Activated CD4-positive, alpha-beta memory T cell treated with anti-CD3 and anti-CD28 coated beads, Interleukin-2, amount 10 ng/mL, durations not matched to agents 7 days and 5 days (primary cell): ENCODE measurements at regions of chr1 and their contacts with region 1.

Region 1: GRCh38 chr1:9004700-9005394 is 21.4 kb downstream of the SLC2A7 start:
- DNase-seq: peak; percentile 87
- H3K4me3 Mint-ChIP-seq: no peak overlapping the region
- H3K27ac Mint-ChIP-seq: no peak overlapping the region
- H3K4me1 Mint-ChIP-seq: peaks cover 10% of the 10 kb centered on the region
- H3K27me3 Mint-ChIP-seq: peaks cover 2% of the 10 kb centered on the region

Region 2: GRCh38 chr1:8727809-8728213 is 277.0 kb before region 1 on chr1:
- CTCF ChIA-PET with region 1: interaction called, 10 read pairs
- POLR2A ChIA-PET with region 1: no interaction called
- DNase-seq: no peak
- H3K4me3 Mint-ChIP-seq: no peak overlapping the region
- H3K27ac Mint-ChIP-seq: no peak overlapping the region
- H3K4me1 Mint-ChIP-seq: peaks cover 21% of the 10 kb centered on the region
- H3K27me3 Mint-ChIP-seq: no peaks in the 10 kb centered on the region

Region 3: GRCh38 chr1:8866792-8867415 is 137.9 kb before region 1 on chr1:
- CTCF ChIA-PET with region 1: interaction called, 72 read pairs
- POLR2A ChIA-PET with region 1: interaction called, 9 read pairs
- DNase-seq: no peak
- H3K4me3 Mint-ChIP-seq: no peak overlapping the region
- H3K27ac Mint-ChIP-seq: peak overlapping the region; percentile 70
- H3K4me1 Mint-ChIP-seq: peaks cover 69% of the 10 kb centered on the region
- H3K27me3 Mint-ChIP-seq: no peaks in the 10 kb centered on the region

Region 4: GRCh38 chr1:8911416-8911815 is 93.4 kb before region 1 on chr1:
- CTCF ChIA-PET with region 1: interaction called, 197 read pairs
- POLR2A ChIA-PET with region 1: no interaction called
- DNase-seq: no peak
- H3K4me3 Mint-ChIP-seq: no peak overlapping the region
- H3K27ac Mint-ChIP-seq: no peak overlapping the region
- H3K4me1 Mint-ChIP-seq: peaks cover 16% of the 10 kb centered on the region
- H3K27me3 Mint-ChIP-seq: peaks cover 17% of the 10 kb centered on the region

Region 5: DNA sequence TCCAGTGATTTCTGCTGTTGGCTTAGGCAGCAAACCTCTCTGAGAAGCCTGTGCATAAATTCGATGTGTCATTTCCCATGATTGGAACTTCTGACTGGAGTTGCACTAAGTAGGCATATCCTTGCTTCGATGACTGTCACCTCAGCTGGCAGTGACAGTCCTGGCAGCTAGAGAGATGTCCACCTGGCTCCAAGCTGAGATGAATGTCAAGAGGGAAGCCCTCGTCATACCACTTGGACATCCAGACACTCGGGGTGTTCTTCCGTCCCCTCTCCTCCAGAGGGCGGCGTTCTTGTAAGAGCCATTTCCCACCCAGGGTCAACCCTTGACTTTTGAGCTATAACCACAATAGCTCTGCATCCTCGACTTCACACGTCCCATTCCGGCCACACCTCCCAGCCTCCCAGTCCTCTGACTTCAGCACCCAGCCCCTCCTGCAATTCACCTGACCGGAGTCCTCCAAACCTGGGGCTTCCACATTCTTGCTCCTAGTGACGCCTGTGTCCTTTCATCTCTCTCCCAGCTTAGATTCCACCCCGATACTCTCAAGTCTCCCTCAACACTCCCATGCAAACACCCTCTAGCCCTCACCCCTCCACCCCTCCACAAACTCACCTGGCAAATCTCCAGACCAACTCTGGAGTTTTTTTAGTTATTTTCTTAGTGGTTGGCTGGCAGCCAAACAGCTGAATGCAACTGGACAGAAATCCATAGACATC is 41.9 kb before region 1 on chr1:
- CTCF ChIA-PET with region 1: interaction called, 24 read pairs
- POLR2A ChIA-PET with region 1: interaction called, 4 read pairs
- DNase-seq: peak; percentile 56
- H3K4me3 Mint-ChIP-seq: no peak overlapping the region
- H3K27ac Mint-ChIP-seq: peak overlapping the region; percentile 54
- H3K4me1 Mint-ChIP-seq: peaks cover 71% of the 10 kb centered on the region
- H3K27me3 Mint-ChIP-seq: no peaks in the 10 kb centered on the region

Region 6: GRCh38 chr1:8992936-8993687 is 11.7 kb before region 1 on chr1:
- CTCF ChIA-PET with region 1: interaction called, 103 read pairs
- POLR2A ChIA-PET with region 1: interaction called, 21 read pairs
- DNase-seq: no peak
- H3K4me3 Mint-ChIP-seq: no peak overlapping the region
- H3K27ac Mint-ChIP-seq: no peak overlapping the region
- H3K4me1 Mint-ChIP-seq: peaks cover 20% of the 10 kb centered on the region
- H3K27me3 Mint-ChIP-seq: peaks cover 5% of the 10 kb centered on the region